Heart right ventricle (tissue), 16 donors: ENCODE measurements at regions of chr1 and their contacts with region 1.

Region 1: DNA sequence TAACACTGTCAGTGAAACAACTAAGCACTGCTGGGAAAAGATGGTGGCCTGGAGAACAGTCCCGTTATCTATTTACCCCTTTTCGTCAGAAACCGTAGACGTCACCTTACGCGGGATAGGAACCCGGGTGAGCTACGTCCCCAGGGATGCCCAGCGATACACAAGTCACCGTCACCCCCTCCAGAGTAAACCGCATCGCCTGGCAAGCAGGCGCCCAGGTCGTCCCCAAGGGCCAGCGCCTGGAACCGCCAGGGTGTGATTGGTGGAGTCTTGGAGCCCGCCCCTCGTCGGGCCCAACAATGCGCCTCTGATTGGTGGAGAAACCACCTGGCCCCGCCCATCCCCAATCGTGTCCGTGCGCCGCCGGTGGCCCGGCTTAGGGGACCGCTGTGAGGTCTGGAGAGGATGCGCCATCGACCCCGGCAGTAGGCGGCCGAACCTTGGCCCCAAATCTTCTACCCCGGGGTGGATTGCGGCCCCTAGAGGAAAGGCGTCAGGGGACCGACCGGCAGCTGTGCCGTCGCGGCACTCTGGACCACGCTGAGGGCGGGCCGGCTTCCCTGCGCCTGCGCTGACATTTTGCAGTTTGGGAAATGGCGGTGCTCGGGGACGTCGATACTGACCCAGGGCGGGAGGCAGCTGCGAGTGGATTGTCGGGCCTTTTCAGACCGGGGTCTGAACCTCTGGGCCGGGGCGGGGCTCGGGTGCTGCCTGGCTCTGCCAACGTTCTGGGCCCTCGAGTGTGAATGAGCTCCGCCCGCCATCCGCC is 34.4 kb downstream of the SLC2A1 start:
- DNase-seq: peak; percentile 95 to 96
- ATAC-seq: peak; percentile 98 to 100 (median 99)
- H3K4me3 ChIP-seq: peak overlapping the region; percentile 64 to 88 (median 76)
- H3K27ac ChIP-seq: peak overlapping the region; percentile 88 to 98 (median 94)
- H3K4me1 ChIP-seq: peaks cover 0 to 18% (median 9%) of the 10 kb centered on the region in 9 donors
- H3K27me3 ChIP-seq: no peaks in the 10 kb centered on the region
- CTCF ChIP-seq: peak in 4 of 9 donors; percentile 17 to 46 (median 28)

Region 2: GRCh38 chr1:42777852-42778251 is 146.4 kb before region 1 on chr1:
- intact Hi-C with region 1: loop called in 4 of 10 experiments (anchors 10 kb)
- DNase-seq: no peak
- ATAC-seq: peak in 5 of 8 donors; percentile 59 to 70 (median 63)
- H3K4me3 ChIP-seq: no peak overlapping the region
- H3K27ac ChIP-seq: no peak overlapping the region
- H3K4me1 ChIP-seq: no peaks in the 10 kb centered on the region
- H3K27me3 ChIP-seq: no peaks in the 10 kb centered on the region
- CTCF ChIP-seq: peak; percentile 32 to 68 (median 62)

Region 3: DNA sequence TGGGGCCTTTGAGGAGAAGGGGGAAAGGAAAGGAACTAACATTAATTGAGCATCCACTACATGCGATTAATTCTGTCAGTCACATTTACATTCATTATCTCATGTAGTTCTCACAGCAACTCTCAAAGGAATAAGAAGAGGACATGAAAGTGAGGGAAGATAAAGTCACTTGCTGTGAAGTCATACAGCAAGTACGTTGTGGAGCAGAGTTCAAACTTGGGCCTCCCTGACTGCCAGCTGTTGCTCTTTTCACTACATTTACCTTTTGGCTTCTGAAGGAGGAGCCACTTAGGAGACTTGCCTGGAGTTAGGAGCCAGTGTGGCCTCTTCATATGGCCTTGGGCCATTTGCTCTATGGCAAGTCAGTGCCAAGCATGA is 71.7 kb before region 1 on chr1:
- intact Hi-C with region 1: no loop called
- DNase-seq: no peak
- ATAC-seq: no peak
- H3K4me3 ChIP-seq: no peak overlapping the region
- H3K27ac ChIP-seq: peak overlapping the region in 1 of 10 donors; percentile 6
- H3K4me1 ChIP-seq: peaks cover 0 to 14% (median 5%) of the 10 kb centered on the region in 9 donors
- H3K27me3 ChIP-seq: no peaks in the 10 kb centered on the region
- CTCF ChIP-seq: no peak

Region 4: GRCh38 chr1:42958488-42959319 is 34.4 kb after region 1 on chr1 and contains the start of gene SLC2A1:
- intact Hi-C with region 1: loop called in 3 of 10 experiments (anchors 2 to 5 kb)
- DNase-seq: peak; percentile 83 to 90
- ATAC-seq: peak; percentile 91 to 98 (median 94)
- H3K4me3 ChIP-seq: peak within 1 kb of the TSS; percentile 29 to 86 (median 76)
- H3K27ac ChIP-seq: peak within 1 kb of the TSS; percentile 66 to 92 (median 82)
- H3K4me1 ChIP-seq: peaks cover 10 to 53% (median 28%) of the 10 kb centered on the region in 9 donors
- H3K27me3 ChIP-seq: peaks cover 0 to 34% (median 0%) of the 10 kb centered on the region in 7 donors
- CTCF ChIP-seq: no peak
- total RNA-seq, gene SLC2A1: 8.2 to 63.7 (median 28.9) TPM